Activated T-helper 1 cell treated with anti-CD3 and anti-CD28 coated beads, Interleukin-12 subunit alpha, Interleukin-12 subunit beta, Interleukin-2, Interleukin-4 antibody, amounts not matched to agents 30 ng/mL and 10 ng/mL and 1 ng/mL, durations not matched to agents 14 hours and 24 hours and 36 hours (primary cell): ENCODE measurements at regions of chr18 and their contacts with region 1.

Region 1: GRCh38 chr18:31942999-31943865 is at the start of gene TRAPPC8:
- DNase-seq: peak; percentile 86
- H3K4me3 Mint-ChIP-seq: peak within 1 kb of the TSS; percentile 97
- H3K27ac Mint-ChIP-seq: peak within 1 kb of the TSS; percentile 95
- H3K4me1 Mint-ChIP-seq: peaks cover 40% of the 10 kb centered on the region
- H3K27me3 Mint-ChIP-seq: no peaks in the 10 kb centered on the region
- total RNA-seq, gene TRAPPC8: 36.7 and 41.6 TPM in 2 replicates

Region 2: DNA sequence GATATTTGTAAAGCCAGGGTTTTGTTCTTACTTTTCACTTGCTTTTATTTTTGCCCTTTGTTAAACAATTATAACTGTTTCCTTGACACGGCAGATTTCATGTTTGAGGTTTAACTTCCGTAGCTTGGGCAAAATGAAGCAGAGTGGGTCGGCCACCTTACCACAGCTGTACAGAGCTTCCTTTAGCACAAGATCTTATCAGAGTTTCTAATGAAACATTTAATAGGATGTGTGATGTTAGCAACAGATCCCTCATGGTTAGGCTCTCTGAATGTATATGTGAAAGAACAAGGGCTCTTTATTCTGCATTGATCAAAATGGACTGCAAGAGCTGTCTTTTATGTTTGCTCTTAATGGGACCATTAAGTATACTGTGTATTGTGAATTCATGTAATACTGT is 97.7 kb after region 1 on chr18:
- intact Hi-C with region 1: loop called (anchors 2 kb)
- DNase-seq: peak; percentile 49
- H3K4me3 Mint-ChIP-seq: peak overlapping the region; percentile 73
- H3K27ac Mint-ChIP-seq: peak overlapping the region; percentile 95
- H3K4me1 Mint-ChIP-seq: peaks cover 48% of the 10 kb centered on the region
- H3K27me3 Mint-ChIP-seq: no peaks in the 10 kb centered on the region

Region 3: GRCh38 chr18:32470713-32471633 is 527.7 kb after region 1 on chr18 and contains the start of gene GAREM1:
- intact Hi-C with region 1: loop called (anchors 5 kb)
- DNase-seq: peak; percentile 79
- H3K4me3 Mint-ChIP-seq: peak within 1 kb of the TSS; percentile 81
- H3K27ac Mint-ChIP-seq: no peak within 1 kb of the TSS
- H3K4me1 Mint-ChIP-seq: peaks cover 31% of the 10 kb centered on the region
- H3K27me3 Mint-ChIP-seq: peaks cover 63% of the 10 kb centered on the region
- total RNA-seq, gene GAREM1: not detected in 2 replicates